Left ventricle myocardium superior (tissue), 1 donor: ENCODE measurements at regions of chrX and their contacts with region 1.

Region 1: DNA sequence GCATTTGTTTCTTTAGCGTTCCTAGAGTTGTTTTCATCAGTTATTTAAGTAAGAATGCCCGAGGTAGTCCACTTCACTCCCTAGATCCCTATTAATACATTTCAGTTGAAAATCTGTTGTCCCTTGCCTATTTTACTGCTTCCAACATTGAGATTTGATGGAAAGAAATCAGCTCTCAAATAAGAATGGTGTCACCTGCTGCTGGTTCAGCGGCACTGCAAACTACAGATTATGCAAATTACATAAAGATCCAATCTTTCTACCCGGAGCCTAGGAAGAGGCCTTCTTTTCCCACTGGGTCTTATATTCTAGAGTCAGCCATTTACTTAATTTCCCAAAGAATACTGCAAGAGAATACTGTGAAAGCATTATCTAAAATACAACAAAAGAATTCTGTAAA is 597.6 kb upstream of the MAGEB2 start:
- DNase-seq: no peak
- ATAC-seq: no peak

Region 2: DNA sequence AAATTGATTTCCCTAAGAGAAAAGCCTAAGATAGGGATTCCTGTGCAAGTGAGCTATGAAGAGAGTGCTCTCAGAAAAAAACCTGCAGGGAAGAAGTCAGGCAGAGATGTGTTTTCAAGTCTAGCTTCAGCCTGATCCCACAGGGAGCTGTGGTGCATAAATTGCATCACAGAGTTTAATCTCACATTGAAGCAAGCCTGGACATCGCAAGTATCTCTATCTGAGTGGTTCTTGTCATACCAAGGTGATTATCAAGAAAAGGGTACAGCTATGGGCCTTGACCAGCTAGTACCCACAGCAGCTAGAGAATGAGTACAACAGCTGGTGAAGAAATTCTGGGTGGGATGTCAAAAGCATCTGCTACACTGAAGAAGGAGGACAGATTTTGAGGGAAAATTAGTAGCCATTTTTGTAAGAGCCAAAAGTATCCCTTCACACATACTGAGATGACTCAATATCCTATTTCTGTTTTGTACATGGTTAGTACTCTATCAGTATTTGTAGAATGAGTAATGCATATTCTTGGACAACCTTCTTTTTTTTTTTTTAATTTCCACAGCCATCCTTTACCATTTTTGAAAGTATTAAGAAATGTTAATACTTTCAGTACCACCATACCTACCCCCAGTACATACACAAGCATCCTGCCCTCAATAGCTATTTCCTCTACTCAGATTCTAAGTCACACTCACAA is 321.6 kb before region 1 on chrX:
- intact Hi-C with region 1: no loop called
- DNase-seq: no peak
- ATAC-seq: no peak

Region 3: DNA sequence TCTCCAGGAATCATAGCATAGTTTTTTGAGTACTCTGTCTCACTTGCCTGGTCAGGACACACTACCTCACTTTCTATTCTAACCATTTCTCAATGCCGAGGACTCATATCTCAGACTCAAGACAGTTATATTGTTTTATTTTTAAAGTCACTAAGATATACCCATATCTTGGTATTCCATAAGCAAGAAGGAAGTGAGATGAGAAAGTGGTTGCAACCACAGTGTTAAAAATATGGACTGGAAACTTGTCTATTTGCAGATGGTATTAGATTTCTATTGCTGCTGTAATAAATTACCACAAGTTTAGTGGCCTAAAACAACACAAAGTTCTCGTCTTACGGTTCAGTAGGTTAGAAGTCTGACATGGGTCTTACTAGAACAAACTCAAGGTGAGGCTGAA is 252.9 kb after region 1 on chrX:
- intact Hi-C with region 1: loop called (anchors 10 kb)
- DNase-seq: no peak
- ATAC-seq: no peak